Calu3 (cell line): ENCODE measurements at regions of chr2 and their contacts with region 1.

Region 1: GRCh38 chr2:218582076-218582475 is 13.4 kb downstream of the CNOT9 start:
- DNase-seq: no peak
- H3K4me3 Mint-ChIP-seq: no peak overlapping the region
- H3K27ac Mint-ChIP-seq: no peak overlapping the region
- H3K4me1 Mint-ChIP-seq: peaks cover 7% of the 10 kb centered on the region
- H3K27me3 Mint-ChIP-seq: no peaks in the 10 kb centered on the region
- CTCF ChIP-seq: no peak

Region 2: GRCh38 chr2:218476676-218477075 is 105.4 kb before region 1 on chr2:
- CTCF ChIA-PET with region 1: no interaction called
- intact Hi-C with region 1: no loop called
- DNase-seq: no peak
- H3K4me3 Mint-ChIP-seq: no peak overlapping the region
- H3K27ac Mint-ChIP-seq: no peak overlapping the region
- H3K4me1 Mint-ChIP-seq: no peaks in the 10 kb centered on the region
- H3K27me3 Mint-ChIP-seq: no peaks in the 10 kb centered on the region
- CTCF ChIP-seq: no peak

Region 3: GRCh38 chr2:218648088-218648786 is 66.2 kb after region 1 on chr2:
- CTCF ChIA-PET with region 1: no interaction called
- intact Hi-C with region 1: loop called (anchors 10 kb)
- DNase-seq: peak; percentile 57
- H3K4me3 Mint-ChIP-seq: no peak overlapping the region
- H3K27ac Mint-ChIP-seq: no peak overlapping the region
- H3K4me1 Mint-ChIP-seq: no peaks in the 10 kb centered on the region
- H3K27me3 Mint-ChIP-seq: no peaks in the 10 kb centered on the region
- CTCF ChIP-seq: peak; percentile 69